Right cardiac atrium (tissue), 5 donors: ENCODE measurements at regions of chr11 and their contacts with region 1.

Region 1: GRCh38 chr11:115496917-115497702 is 7.1 kb downstream of the CADM1 start:
- DNase-seq: no peak
- ATAC-seq: no peak
- H3K4me3 ChIP-seq: no peak overlapping the region
- H3K27ac ChIP-seq: no peak overlapping the region
- H3K4me1 ChIP-seq: no peaks in the 10 kb centered on the region
- H3K27me3 ChIP-seq: no peaks in the 10 kb centered on the region

Region 2: GRCh38 chr11:115347138-115347537 is 150.0 kb before region 1 on chr11:
- intact Hi-C with region 1: loop called in 2 of 4 experiments (anchors 5 to 10 kb)
- DNase-seq: no peak
- ATAC-seq: no peak
- H3K4me3 ChIP-seq: no peak overlapping the region
- H3K27ac ChIP-seq: no peak overlapping the region
- H3K4me1 ChIP-seq: no peaks in the 10 kb centered on the region
- H3K27me3 ChIP-seq: no peaks in the 10 kb centered on the region

Region 3: GRCh38 chr11:115409691-115410220 is 87.4 kb before region 1 on chr11:
- intact Hi-C with region 1: no loop called
- DNase-seq: no peak
- ATAC-seq: no peak
- H3K4me3 ChIP-seq: no peak overlapping the region
- H3K27ac ChIP-seq: no peak overlapping the region
- H3K4me1 ChIP-seq: no peaks in the 10 kb centered on the region
- H3K27me3 ChIP-seq: no peaks in the 10 kb centered on the region

Region 4: DNA sequence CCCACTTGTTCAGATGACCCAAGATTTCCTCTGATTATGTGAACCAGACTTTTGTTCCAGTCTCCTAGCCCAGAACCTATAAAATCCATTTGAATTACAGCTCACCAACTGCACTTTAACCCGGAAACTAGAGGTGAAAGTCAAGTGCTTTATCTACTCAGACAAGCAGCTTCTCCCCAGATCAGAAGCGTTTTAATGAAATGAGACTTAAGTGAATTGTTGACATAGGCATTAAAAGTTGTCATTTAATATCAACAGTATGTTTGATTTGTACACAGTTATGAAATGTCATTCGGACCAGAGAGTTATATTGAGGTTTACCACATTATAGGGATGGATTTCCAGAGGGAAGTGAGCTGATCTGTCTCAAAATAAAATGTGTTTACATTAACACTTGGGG is 44.9 kb before region 1 on chr11:
- intact Hi-C with region 1: no loop called
- DNase-seq: no peak
- ATAC-seq: no peak
- H3K4me3 ChIP-seq: no peak overlapping the region
- H3K27ac ChIP-seq: no peak overlapping the region
- H3K4me1 ChIP-seq: no peaks in the 10 kb centered on the region
- H3K27me3 ChIP-seq: no peaks in the 10 kb centered on the region